Panc1 (cell line): ENCODE measurements at regions of chr18 and their contacts with region 1.

Region 1: DNA sequence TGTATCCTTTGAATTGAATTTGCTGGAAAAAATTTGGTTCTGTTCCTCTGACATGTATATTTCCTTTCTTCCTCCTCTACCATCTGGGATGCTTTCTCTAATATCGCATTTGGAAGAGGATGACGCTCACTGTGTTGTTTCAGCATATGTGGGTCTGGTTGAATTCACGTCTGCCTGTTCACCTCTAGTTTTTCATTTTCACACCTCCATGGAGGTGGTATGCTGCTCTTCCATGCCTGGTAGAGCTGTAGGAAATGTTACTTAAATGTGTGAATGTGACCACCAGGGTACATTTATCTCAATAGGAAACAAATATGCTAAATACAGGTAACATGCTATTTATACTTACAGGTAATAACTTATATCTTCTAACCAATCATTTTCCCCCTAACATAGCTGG is 44.5 kb downstream of the TSHZ1 start:
- DNase-seq: no peak
- ATAC-seq: no peak
- H3K4me3 ChIP-seq: no peak overlapping the region
- H3K27ac ChIP-seq: no peak overlapping the region
- H3K4me1 ChIP-seq: no peaks in the 10 kb centered on the region; the same call in 1 of the 2 replicates
- H3K27me3 ChIP-seq: no peaks in the 10 kb centered on the region
- CTCF ChIP-seq: no peak; the same call in 1 of the 2 replicates

Region 2: GRCh38 chr18:75896865-75897264 is 641.8 kb after region 1 on chr18:
- CTCF ChIA-PET with region 1: interaction called, 13 read pairs
- POLR2A ChIA-PET with region 1: no interaction called
- in situ Hi-C with region 1: no loop called
- intact Hi-C with region 1: no loop called
- DNase-seq: no peak
- ATAC-seq: peak; percentile 78
- H3K4me3 ChIP-seq: no peak overlapping the region
- H3K27ac ChIP-seq: no peak overlapping the region
- H3K4me1 ChIP-seq: no peaks in the 10 kb centered on the region
- H3K27me3 ChIP-seq: 0 out of 2 replicates have a peak, but pooled peaks cover 2% of the 10 kb centered on the region
- CTCF ChIP-seq: peak; percentile 50